ENCODE measurements at regions of chr2 and their contacts with region 1.

Region 1: GRCh38 chr2:170815746-170816503 is 762 bp upstream of the GAD1 start:
- DNase-seq: peak; percentile 71 to 81 (median 75)
- ATAC-seq: peak; percentile 65
- H3K4me3 ChIP-seq: no peak overlapping the region
- H3K27ac ChIP-seq: no peak overlapping the region
- H3K4me1 ChIP-seq: peaks cover 53% of the 10 kb centered on the region
- H3K27me3 ChIP-seq: peaks cover 0 to 54% of the 10 kb centered on the region in 2 donors
- CTCF ChIP-seq: peak; percentile 71 to 97 (median 87)
- POLR2A ChIP-seq: no peak

Region 2: DNA sequence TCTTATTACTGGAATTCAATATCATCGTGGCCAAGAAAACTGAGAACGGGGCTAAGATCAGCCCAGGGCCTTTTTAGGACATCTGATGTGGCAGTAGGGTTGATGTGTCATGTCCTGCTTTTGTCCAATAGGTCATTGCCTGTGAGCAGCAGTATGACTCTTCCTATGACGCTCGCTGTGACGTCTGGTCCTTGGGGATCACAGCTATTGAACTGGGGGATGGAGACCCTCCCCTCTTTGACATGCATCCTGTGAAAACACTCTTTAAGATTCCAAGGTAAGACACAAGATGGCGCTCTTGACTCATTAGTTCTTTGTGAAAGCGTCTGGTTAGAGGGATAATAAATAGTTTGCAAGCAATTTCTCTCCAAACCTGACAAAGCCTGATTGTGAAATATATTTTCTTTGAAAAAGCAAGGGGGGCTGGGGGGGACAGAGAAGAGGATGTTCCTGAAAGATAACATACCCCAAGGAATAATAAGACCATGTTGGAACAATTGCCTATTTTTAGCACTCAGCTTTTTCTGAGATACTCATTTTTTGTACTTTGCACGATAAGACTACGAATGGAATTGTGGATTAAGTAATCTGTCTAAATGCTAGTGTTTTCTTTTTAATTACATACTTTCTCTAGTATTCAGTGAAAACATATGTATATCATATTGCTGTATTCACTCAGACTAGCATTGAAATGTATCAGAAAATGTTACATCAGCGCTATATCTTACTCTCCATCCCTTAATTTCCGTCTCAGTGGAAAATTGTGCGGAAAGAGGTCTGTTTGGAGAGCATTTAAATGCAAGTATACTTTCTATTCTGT is 579.9 kb before region 1 on chr2:
- intact Hi-C with region 1: loop called (anchors 10 kb)
- DNase-seq: no peak
- ATAC-seq: peak; percentile 24
- H3K4me3 ChIP-seq: no peak overlapping the region
- H3K27ac ChIP-seq: no peak overlapping the region
- H3K4me1 ChIP-seq: no peaks in the 10 kb centered on the region
- H3K27me3 ChIP-seq: no peaks in the 10 kb centered on the region
- CTCF ChIP-seq: peak in 5 of 7 experiments; percentile 35 to 48 (median 43)
- POLR2A ChIP-seq: no peak

Region 3: DNA sequence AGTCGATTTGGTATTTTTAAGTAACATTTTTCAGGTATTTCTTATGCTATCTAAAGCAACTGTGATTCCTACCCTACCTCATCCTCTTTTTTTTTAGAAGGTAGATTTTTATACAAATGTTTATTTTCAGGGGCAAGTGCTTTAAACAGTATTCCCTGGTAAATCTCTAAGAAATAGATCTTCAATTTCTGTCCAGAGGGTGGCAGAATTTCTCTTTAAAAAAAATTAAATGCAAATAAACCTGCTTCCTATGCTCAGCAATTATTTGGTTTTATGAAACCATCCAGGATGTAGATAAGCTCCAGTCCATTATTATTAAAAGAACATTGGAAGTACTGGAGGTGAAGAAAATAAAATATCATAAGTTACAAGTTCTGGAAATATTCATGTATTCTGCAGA is 446.0 kb before region 1 on chr2:
- intact Hi-C with region 1: loop called (anchors 10 kb)
- DNase-seq: no peak
- ATAC-seq: no peak
- H3K4me3 ChIP-seq: no peak overlapping the region
- H3K27ac ChIP-seq: no peak overlapping the region
- H3K4me1 ChIP-seq: no peaks in the 10 kb centered on the region
- H3K27me3 ChIP-seq: no peaks in the 10 kb centered on the region
- CTCF ChIP-seq: peak in 6 of 7 experiments; percentile 11 to 47 (median 37)
- POLR2A ChIP-seq: no peak

Region 4: GRCh38 chr2:170409164-170409535 is 406.8 kb before region 1 on chr2:
- intact Hi-C with region 1: loop called (anchors 10 kb)
- DNase-seq: peak; percentile 73 to 77 (median 76)
- ATAC-seq: peak; percentile 59
- H3K4me3 ChIP-seq: no peak overlapping the region
- H3K27ac ChIP-seq: no peak overlapping the region
- H3K4me1 ChIP-seq: peaks cover 6% of the 10 kb centered on the region
- H3K27me3 ChIP-seq: no peaks in the 10 kb centered on the region
- CTCF ChIP-seq: peak; percentile 70 to 85 (median 83)
- POLR2A ChIP-seq: no peak

Measured in body of pancreas (tissue), 4 donors.